ENCODE measurements at regions of chr19 and their contacts with region 1.

Region 1: GRCh38 chr19:19053508-19054314 is 10.1 kb upstream of the SLC25A42 start:
- DNase-seq: peak; percentile 48
- ATAC-seq: peak; percentile 69
- H3K4me3 Mint-ChIP-seq: no peak overlapping the region
- H3K27ac Mint-ChIP-seq: no peak overlapping the region
- H3K4me1 Mint-ChIP-seq: no peaks in the 10 kb centered on the region
- H3K27me3 Mint-ChIP-seq: no peaks in the 10 kb centered on the region
- CTCF ChIP-seq: no peak

Region 2: GRCh38 chr19:18795540-18795939 is 258.2 kb before region 1 on chr19:
- CTCF ChIA-PET with region 1: no interaction called
- POLR2A ChIA-PET with region 1: no interaction called
- intact Hi-C with region 1: no loop called
- DNase-seq: no peak
- ATAC-seq: no peak
- H3K4me3 Mint-ChIP-seq: no peak overlapping the region
- H3K27ac Mint-ChIP-seq: no peak overlapping the region
- H3K4me1 Mint-ChIP-seq: peaks cover 4% of the 10 kb centered on the region
- H3K27me3 Mint-ChIP-seq: peaks cover 38% of the 10 kb centered on the region
- CTCF ChIP-seq: no peak

Region 3: DNA sequence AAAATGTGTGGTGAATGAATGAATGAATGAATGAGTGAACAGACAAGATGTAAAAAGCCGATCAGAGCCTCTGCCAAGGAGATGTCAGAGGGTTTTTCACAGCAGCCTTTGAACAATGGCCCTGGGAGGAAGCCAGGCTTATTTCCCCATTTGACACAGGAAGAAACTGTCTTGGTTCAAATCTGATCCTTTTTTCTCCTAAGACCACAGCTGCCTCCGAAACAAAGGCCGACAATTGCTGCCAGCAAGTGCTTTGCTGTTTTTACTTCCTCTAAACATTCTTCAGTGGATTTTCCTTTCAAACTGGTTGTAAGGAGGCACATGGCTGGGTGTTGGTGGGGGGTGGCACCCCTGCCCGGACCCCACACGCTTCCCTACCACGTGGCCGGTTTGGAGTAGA is 68.5 kb before region 1 on chr19:
- CTCF ChIA-PET with region 1: no interaction called
- POLR2A ChIA-PET with region 1: no interaction called
- intact Hi-C with region 1: no loop called
- DNase-seq: no peak
- ATAC-seq: no peak
- H3K4me3 Mint-ChIP-seq: no peak overlapping the region
- H3K27ac Mint-ChIP-seq: no peak overlapping the region
- H3K4me1 Mint-ChIP-seq: peaks cover 9% of the 10 kb centered on the region
- H3K27me3 Mint-ChIP-seq: peaks cover 4% of the 10 kb centered on the region
- CTCF ChIP-seq: no peak

Region 4: DNA sequence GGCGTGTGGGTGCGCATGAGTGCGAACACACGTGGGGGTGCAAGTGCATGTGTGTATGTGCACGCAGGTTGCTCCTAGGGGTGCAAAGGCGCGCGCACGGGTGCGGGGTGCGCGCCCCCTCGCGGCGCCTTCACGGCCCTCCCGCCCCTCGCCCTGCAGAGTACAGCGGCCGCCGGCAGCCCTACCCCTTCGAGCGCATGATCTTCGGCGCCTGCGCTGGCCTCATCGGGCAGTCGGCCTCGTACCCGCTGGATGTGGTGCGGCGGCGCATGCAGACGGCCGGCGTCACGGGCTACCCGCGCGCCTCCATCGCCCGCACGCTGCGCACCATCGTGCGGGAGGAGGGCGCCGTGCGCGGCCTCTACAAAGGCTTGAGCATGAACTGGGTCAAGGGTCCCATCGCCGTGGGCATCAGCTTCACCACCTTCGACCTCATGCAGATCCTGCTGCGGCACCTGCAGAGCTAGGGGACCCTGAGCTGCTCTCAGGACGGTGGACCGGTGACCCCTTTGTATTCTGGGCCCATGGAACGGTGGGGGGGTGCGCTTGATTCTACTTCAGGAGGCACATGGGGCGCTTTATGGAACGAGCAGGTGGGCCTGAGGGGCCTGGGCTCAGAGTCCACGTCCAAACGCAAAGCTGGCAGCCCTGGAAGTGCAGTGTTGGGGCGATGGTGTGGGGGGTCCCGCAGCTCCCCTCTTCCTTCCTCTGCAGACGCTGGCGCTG is 56.9 kb after region 1 on chr19:
- CTCF ChIA-PET with region 1: interaction called, 10 read pairs
- POLR2A ChIA-PET with region 1: no interaction called
- intact Hi-C with region 1: loop called (anchors 1 kb)
- DNase-seq: no peak
- ATAC-seq: peak; percentile 60
- H3K4me3 Mint-ChIP-seq: no peak overlapping the region
- H3K27ac Mint-ChIP-seq: no peak overlapping the region
- H3K4me1 Mint-ChIP-seq: peaks cover 26% of the 10 kb centered on the region
- H3K27me3 Mint-ChIP-seq: no peaks in the 10 kb centered on the region
- CTCF ChIP-seq: no peak

Region 5: GRCh38 chr19:19115954-19116353 is 62.2 kb after region 1 on chr19:
- CTCF ChIA-PET with region 1: interaction called, 10 read pairs
- POLR2A ChIA-PET with region 1: no interaction called
- intact Hi-C with region 1: no loop called
- DNase-seq: peak; percentile 38
- ATAC-seq: peak; percentile 56
- H3K4me3 Mint-ChIP-seq: no peak overlapping the region
- H3K27ac Mint-ChIP-seq: no peak overlapping the region
- H3K4me1 Mint-ChIP-seq: peaks cover 13% of the 10 kb centered on the region
- H3K27me3 Mint-ChIP-seq: no peaks in the 10 kb centered on the region
- CTCF ChIP-seq: no peak

Region 6: DNA sequence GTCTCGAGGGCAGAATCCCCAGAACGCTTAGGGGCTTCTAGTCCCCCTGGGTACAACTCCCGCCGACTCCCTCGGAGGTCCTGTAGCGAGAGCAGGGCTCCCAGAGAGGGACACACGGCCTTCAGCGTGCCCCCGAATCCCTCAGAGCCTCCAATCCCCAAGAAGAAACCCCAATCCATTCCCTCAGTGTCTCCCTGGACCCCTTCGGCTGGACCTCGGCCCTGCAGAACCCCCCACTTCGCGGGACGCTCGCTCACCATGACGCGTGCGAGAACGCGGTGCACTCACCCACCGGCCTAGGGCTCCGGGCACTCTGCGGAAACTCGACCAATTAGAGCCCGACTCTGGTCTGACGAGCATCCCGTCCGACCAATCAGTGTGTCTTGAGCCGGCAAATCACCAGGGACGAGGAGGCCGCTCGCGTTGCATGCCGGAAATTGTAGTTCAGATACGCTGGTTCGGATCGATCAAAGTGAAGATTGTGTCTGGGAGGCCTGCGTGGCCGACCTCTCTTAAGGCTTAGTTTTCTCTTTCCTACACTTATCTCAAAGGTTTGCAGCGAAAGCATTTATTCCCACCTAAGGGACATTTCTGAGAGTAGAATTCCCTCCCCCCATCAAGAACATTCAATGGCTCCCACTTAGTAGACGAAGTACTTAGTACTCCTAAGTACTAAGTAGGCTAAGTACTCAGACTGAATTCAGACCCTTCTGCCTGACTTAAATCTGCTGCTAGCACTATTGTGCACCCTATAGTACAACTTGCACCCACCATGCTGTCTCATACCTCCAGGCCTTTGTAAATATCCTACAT is 84.7 kb after region 1 on chr19 and contains the start of gene TMEM161A:
- CTCF ChIA-PET with region 1: interaction called, 7 read pairs
- POLR2A ChIA-PET with region 1: no interaction called
- intact Hi-C with region 1: loop called (anchors 1 kb)
- DNase-seq: peak; percentile 90
- ATAC-seq: peak; percentile 99
- H3K4me3 Mint-ChIP-seq: peak within 1 kb of the TSS; percentile 98
- H3K27ac Mint-ChIP-seq: peak within 1 kb of the TSS; percentile 90
- H3K4me1 Mint-ChIP-seq: peaks cover 30% of the 10 kb centered on the region
- H3K27me3 Mint-ChIP-seq: no peaks in the 10 kb centered on the region
- CTCF ChIP-seq: no peak
- total RNA-seq, gene TMEM161A: 20.8 and 22.6 TPM in 2 replicates

Region 7: DNA sequence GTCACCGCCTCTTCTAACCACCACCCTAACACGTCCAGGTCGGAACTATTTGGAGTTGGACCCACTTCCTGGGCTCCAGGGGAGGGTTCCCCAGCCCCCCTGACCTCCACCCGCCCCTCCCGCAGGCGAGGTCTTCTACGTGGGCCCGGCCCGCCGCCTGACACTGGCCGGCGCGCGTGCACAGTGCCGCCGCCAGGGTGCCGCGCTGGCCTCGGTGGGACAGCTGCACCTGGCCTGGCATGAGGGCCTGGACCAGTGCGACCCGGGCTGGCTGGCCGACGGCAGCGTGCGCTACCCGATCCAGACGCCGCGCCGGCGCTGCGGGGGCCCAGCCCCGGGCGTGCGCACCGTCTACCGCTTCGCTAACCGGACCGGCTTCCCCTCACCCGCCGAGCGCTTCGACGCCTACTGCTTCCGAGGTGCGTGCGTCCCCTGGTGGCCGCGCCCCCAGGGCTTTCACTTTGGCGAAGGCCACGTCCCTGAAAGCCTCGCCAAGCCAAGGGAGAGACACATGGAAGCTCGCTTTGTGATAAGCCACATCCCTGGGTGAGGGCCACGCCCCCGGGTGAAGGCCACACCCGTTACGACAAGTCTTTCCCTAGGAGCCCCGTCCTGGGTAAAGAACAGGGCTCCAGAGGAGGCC is 171.3 kb after region 1 on chr19:
- CTCF ChIA-PET with region 1: interaction called, 3 read pairs
- POLR2A ChIA-PET with region 1: no interaction called
- intact Hi-C with region 1: loop called (anchors 1 kb)
- DNase-seq: peak; percentile 71
- ATAC-seq: peak; percentile 96
- H3K4me3 Mint-ChIP-seq: peak overlapping the region; percentile 75
- H3K27ac Mint-ChIP-seq: no peak overlapping the region
- H3K4me1 Mint-ChIP-seq: peaks cover 4% of the 10 kb centered on the region
- H3K27me3 Mint-ChIP-seq: peaks cover 19% of the 10 kb centered on the region
- CTCF ChIP-seq: peak; percentile 20

Region 8: DNA sequence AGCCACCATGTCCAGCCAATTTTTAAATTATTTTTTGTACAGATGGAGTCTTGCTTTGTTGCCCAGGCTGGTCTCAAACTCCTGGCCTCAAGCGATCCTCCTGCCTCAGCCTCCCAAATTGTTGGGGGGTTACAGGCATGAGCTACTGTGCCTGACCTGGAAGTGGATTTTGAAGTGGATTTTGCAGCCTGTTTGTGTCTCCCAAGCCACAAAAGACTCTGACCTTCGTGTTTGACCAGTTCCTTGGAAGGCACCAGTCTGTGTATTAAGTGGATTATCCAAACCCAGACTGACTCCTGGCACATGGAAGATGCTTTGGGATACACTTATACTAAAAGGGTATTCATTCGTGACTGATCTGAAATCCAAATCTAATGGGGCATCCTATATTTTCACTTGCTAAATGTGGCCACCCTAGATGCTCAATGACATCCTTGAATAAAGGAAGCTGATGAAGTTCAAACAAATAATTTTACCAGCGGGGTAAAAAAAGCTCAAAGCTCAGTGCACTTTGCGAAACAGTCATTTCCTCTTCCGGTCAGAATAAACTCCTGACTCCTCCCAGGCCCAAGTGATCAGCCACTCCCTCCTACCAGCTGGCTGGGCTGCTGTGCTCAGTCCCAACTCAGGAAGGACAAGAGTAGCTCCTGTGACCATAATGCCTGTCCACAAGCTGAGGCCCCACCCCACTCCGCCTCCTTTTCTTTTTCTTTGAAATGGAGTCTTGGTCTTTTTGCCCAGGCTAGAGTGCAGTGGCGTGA is 319.1 kb after region 1 on chr19:
- CTCF ChIA-PET with region 1: no interaction called
- POLR2A ChIA-PET with region 1: interaction called, 10 read pairs
- intact Hi-C with region 1: no loop called
- DNase-seq: no peak
- ATAC-seq: peak; percentile 98
- H3K4me3 Mint-ChIP-seq: peak overlapping the region; percentile 69
- H3K27ac Mint-ChIP-seq: peak overlapping the region; percentile 94
- H3K4me1 Mint-ChIP-seq: peaks cover 12% of the 10 kb centered on the region
- H3K27me3 Mint-ChIP-seq: no peaks in the 10 kb centered on the region
- CTCF ChIP-seq: no peak

Region 9: GRCh38 chr19:19488875-19489690 is 435.4 kb after region 1 on chr19:
- CTCF ChIA-PET with region 1: no interaction called
- POLR2A ChIA-PET with region 1: no interaction called
- intact Hi-C with region 1: no loop called
- DNase-seq: peak; percentile 53
- ATAC-seq: peak; percentile 62
- H3K4me3 Mint-ChIP-seq: peak overlapping the region; percentile 58
- H3K27ac Mint-ChIP-seq: peak overlapping the region; percentile 91
- H3K4me1 Mint-ChIP-seq: peaks cover 58% of the 10 kb centered on the region
- H3K27me3 Mint-ChIP-seq: no peaks in the 10 kb centered on the region
- CTCF ChIP-seq: no peak